Activated CD4-positive, alpha-beta T cell treated with anti-CD3 and anti-CD28 coated beads, Interleukin-2, amount 10 ng/mL, durations not matched to agents 24 days and 14 days (primary cell): ENCODE measurements at regions of chr5 and their contacts with region 1.

Region 1: GRCh38 chr5:138077065-138077696 is 6.7 kb upstream of the WNT8A start:
- DNase-seq: peak; percentile 84
- H3K4me3 Mint-ChIP-seq: no peak overlapping the region
- H3K27ac Mint-ChIP-seq: no peak overlapping the region
- H3K4me1 Mint-ChIP-seq: peaks cover 8% of the 10 kb centered on the region
- H3K27me3 Mint-ChIP-seq: peaks cover 5% of the 10 kb centered on the region

Region 2: GRCh38 chr5:137954131-137954879 is 122.9 kb before region 1 on chr5:
- intact Hi-C with region 1: no loop called
- DNase-seq: no peak
- H3K4me3 Mint-ChIP-seq: no peak overlapping the region
- H3K27ac Mint-ChIP-seq: no peak overlapping the region
- H3K4me1 Mint-ChIP-seq: peaks cover 3% of the 10 kb centered on the region
- H3K27me3 Mint-ChIP-seq: no peaks in the 10 kb centered on the region

Region 3: DNA sequence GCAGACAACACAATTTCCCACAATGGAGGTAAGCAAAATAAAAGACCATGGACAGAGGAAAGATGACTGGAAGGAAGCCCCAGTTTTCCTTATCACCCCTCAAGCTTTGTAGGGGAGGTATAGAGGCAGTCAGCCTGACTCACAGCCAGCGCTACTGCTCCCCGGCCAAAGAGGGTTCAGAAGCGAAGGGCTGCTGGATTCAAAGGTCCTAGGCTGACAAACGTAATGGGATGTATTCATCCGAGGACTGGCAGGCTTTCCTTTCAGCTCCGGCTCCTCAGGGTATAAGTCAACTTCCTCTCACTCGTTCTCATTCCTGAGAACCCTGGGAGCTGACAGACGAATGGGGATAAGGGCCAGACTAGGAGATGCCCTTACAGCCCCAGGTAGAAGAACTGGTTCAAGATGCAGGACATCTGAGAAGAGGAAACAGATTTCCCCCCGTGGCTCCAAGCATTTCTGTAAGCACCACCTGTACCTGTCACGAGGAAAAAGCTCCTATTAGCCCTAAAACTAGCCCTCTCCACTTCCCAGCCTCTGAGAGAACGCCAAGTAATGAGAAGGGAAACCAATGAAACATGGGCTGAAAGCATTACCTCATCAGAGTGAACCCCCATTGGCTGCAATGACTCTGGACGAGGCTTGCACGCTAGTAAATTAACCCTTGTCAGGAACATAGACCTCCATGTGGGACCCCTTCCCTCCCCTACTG is 22.2 kb before region 1 on chr5:
- intact Hi-C with region 1: no loop called
- DNase-seq: no peak
- H3K4me3 Mint-ChIP-seq: no peak overlapping the region
- H3K27ac Mint-ChIP-seq: no peak overlapping the region
- H3K4me1 Mint-ChIP-seq: peaks cover 5% of the 10 kb centered on the region
- H3K27me3 Mint-ChIP-seq: peaks cover 4% of the 10 kb centered on the region

Region 4: GRCh38 chr5:138128334-138128733 is 51.2 kb after region 1 on chr5:
- intact Hi-C with region 1: loop called (anchors 1 kb)
- DNase-seq: no peak
- H3K4me3 Mint-ChIP-seq: no peak overlapping the region
- H3K27ac Mint-ChIP-seq: no peak overlapping the region
- H3K4me1 Mint-ChIP-seq: no peaks in the 10 kb centered on the region
- H3K27me3 Mint-ChIP-seq: peaks cover 12% of the 10 kb centered on the region